ENCODE measurements at regions of chr2 and their contacts with region 1.

Region 1: DNA sequence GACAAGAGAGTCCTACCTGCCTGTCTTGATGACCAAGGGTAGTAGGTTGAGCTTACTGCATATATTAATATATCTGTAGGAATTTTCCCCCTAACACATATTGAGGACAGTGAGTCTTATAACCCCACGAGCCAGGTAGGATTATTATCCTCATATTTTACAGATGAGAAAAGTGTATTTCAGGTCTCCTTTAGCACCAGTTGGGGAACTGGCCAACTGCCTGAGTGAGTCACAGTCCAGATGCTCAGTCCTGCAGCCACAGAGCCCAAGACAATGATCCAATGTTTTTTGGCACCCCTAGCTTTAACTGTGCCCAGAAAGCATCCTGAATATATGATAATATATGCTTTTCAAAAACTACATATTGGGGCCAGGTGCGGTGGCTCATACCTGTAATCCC is 30.8 kb upstream of the GLS start:
- DNase-seq: no peak
- ATAC-seq: no peak
- H3K4me3 Mint-ChIP-seq: no peak overlapping the region
- H3K27ac Mint-ChIP-seq: no peak overlapping the region
- H3K4me1 Mint-ChIP-seq: no peaks in the 10 kb centered on the region
- H3K27me3 Mint-ChIP-seq: peaks cover 2% of the 10 kb centered on the region

Region 2: GRCh38 chr2:190607014-190607597 is 242.7 kb before region 1 on chr2:
- CTCF ChIA-PET with region 1: no interaction called
- POLR2A ChIA-PET with region 1: no interaction called
- DNase-seq: no peak
- ATAC-seq: no peak
- H3K4me3 Mint-ChIP-seq: no peak overlapping the region
- H3K27ac Mint-ChIP-seq: no peak overlapping the region
- H3K4me1 Mint-ChIP-seq: no peaks in the 10 kb centered on the region
- H3K27me3 Mint-ChIP-seq: no peaks in the 10 kb centered on the region

Region 3: GRCh38 chr2:190887089-190887488 is 37.3 kb after region 1 on chr2:
- CTCF ChIA-PET with region 1: interaction called, 33 read pairs
- POLR2A ChIA-PET with region 1: no interaction called
- DNase-seq: no peak
- ATAC-seq: no peak
- H3K4me3 Mint-ChIP-seq: no peak overlapping the region
- H3K27ac Mint-ChIP-seq: no peak overlapping the region
- H3K4me1 Mint-ChIP-seq: peaks cover 66% of the 10 kb centered on the region
- H3K27me3 Mint-ChIP-seq: no peaks in the 10 kb centered on the region

Region 4: GRCh38 chr2:190970873-190971506 is 121.2 kb after region 1 on chr2:
- CTCF ChIA-PET with region 1: no interaction called
- POLR2A ChIA-PET with region 1: no interaction called
- DNase-seq: no peak
- ATAC-seq: peak; percentile 7
- H3K4me3 Mint-ChIP-seq: no peak overlapping the region
- H3K27ac Mint-ChIP-seq: peak overlapping the region; percentile 61
- H3K4me1 Mint-ChIP-seq: peaks cover 45% of the 10 kb centered on the region
- H3K27me3 Mint-ChIP-seq: no peaks in the 10 kb centered on the region